ENCODE measurements at regions of chr6 and their contacts with region 1.

Region 1: GRCh38 chr6:109073344-109074132 is 21.1 kb downstream of the SESN1 start:
- DNase-seq: peak in 1 of 2 experiments; percentile 71
- H3K4me3 ChIP-seq: no peak overlapping the region
- H3K4me3 Mint-ChIP-seq: no peak overlapping the region
- H3K27ac Mint-ChIP-seq: no peak overlapping the region
- H3K4me1 ChIP-seq: peaks cover 16% of the 10 kb centered on the region; the same call in 1 of the 2 replicates
- H3K4me1 Mint-ChIP-seq: peaks cover 21% of the 10 kb centered on the region
- H3K27me3 ChIP-seq: no peaks in the 10 kb centered on the region
- H3K27me3 Mint-ChIP-seq: no peaks in the 10 kb centered on the region
- CTCF ChIP-seq: peak; percentile 47 to 59

Region 2: GRCh38 chr6:108541838-108542759 is 531.4 kb before region 1 on chr6:
- CTCF ChIA-PET with region 1: interaction called, 9 read pairs
- POLR2A ChIA-PET with region 1: no interaction called
- intact Hi-C with region 1: loop called (anchors 1 kb)
- DNase-seq: peak; percentile 67 to 74
- H3K4me3 ChIP-seq: peak overlapping the region; percentile 1; the same call in 1 of the 2 replicates
- H3K4me3 Mint-ChIP-seq: peak overlapping the region; percentile 55
- H3K27ac Mint-ChIP-seq: no peak overlapping the region
- H3K4me1 ChIP-seq: no peaks in the 10 kb centered on the region
- H3K4me1 Mint-ChIP-seq: no peaks in the 10 kb centered on the region
- H3K27me3 ChIP-seq: no peaks in the 10 kb centered on the region
- H3K27me3 Mint-ChIP-seq: no peaks in the 10 kb centered on the region
- CTCF ChIP-seq: peak; percentile 76 to 85

Region 3: DNA sequence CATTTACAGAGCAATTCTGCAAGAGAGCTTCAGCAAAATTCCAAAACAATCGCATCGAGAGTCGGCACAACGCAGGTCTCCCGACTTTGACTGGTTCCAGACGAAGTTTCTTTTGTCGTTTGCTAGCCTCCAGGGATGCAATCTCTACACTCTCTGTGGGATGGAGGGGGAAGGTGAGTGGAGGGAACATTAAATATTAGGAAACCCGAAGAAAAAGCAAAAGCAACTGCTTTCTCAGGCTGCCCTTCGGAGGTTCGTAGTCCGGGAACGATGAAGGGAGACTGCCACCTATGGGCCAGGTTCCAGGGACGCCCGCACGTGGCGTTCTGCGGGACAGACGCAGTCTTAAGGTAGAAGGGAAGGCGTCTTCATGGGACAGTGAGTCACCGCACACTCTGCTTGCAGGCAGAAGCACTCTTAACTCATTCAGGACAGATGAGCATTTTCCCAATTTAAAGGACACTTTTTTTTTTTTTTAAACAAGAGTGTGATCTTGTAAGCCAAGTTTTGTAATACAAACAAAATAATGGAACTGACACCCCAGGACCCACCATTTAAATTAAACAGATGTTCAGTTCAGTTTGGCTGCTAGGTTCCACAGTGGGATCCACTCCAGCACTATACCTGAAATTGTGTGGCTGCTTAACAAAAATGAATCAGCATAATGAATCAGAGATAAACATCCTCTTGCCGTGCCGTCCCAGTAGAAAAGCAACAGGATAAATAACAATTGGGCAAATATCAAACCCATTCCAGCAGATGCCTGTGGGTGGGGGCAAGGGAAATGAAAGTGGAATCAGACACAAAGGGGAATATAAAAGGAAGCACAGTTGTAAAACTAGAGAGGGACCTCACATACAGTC is 291.1 kb before region 1 on chr6:
- CTCF ChIA-PET with region 1: no interaction called
- POLR2A ChIA-PET with region 1: no interaction called
- intact Hi-C with region 1: loop called (anchors 1 kb)
- DNase-seq: peak; percentile 84 to 86
- H3K4me3 ChIP-seq: peak overlapping the region; percentile 30
- H3K4me3 Mint-ChIP-seq: peak overlapping the region; percentile 69
- H3K27ac Mint-ChIP-seq: no peak overlapping the region
- H3K4me1 ChIP-seq: 0 out of 2 replicates have a peak, but pooled peaks cover 7% of the 10 kb centered on the region
- H3K4me1 Mint-ChIP-seq: peaks cover 21% of the 10 kb centered on the region
- H3K27me3 ChIP-seq: no peaks in the 10 kb centered on the region
- H3K27me3 Mint-ChIP-seq: no peaks in the 10 kb centered on the region
- CTCF ChIP-seq: peak; percentile 72 to 92

Region 4: DNA sequence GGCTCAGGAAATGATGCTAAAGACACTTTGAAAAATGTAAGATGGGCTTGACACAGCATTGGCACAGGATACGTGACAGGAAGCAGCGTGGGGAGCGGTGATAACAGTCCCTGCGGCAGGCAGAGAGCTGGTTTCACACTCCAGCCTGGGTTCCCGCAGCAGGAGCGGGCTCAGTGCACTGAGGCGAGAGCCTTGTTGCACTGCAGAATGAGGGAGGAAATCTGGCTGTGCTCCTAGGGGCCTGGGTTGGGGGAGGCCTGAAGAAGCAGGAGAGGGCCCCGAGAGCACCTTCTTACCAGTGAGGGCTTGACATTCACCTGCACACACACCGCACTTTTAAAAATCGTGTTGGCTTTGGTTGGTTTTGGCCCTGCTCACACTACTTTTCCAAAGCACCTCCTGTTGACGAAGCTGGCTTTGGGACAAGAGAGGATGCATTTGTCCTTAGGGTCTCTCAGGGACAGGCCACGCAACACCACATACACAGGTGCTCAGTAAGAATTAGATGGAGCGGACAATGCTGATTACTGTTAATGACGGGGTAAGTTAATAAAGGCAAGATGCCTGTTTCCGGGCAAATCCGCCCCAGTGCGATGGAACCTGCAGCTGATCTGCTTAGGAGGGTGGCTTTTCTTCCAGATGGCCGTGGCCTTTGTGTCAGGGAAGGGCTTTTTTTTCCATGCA is 274.7 kb before region 1 on chr6:
- CTCF ChIA-PET with region 1: no interaction called
- POLR2A ChIA-PET with region 1: no interaction called
- intact Hi-C with region 1: loop called (anchors 1 kb)
- DNase-seq: no peak
- H3K4me3 ChIP-seq: no peak overlapping the region
- H3K4me3 Mint-ChIP-seq: peak overlapping the region; percentile 28
- H3K27ac Mint-ChIP-seq: peak overlapping the region; percentile 43
- H3K4me1 ChIP-seq: peaks cover 36% of the 10 kb centered on the region
- H3K4me1 Mint-ChIP-seq: peaks cover 23% of the 10 kb centered on the region
- H3K27me3 ChIP-seq: no peaks in the 10 kb centered on the region
- H3K27me3 Mint-ChIP-seq: no peaks in the 10 kb centered on the region
- CTCF ChIP-seq: no peak

Region 5: GRCh38 chr6:108896111-108896661 is 177.4 kb before region 1 on chr6:
- CTCF ChIA-PET with region 1: interaction called, 3 read pairs
- POLR2A ChIA-PET with region 1: no interaction called
- intact Hi-C with region 1: loop called (anchors 2 kb)
- DNase-seq: no peak
- H3K4me3 ChIP-seq: no peak overlapping the region
- H3K4me3 Mint-ChIP-seq: no peak overlapping the region
- H3K27ac Mint-ChIP-seq: no peak overlapping the region
- H3K4me1 ChIP-seq: peaks cover 10% of the 10 kb centered on the region
- H3K4me1 Mint-ChIP-seq: peaks cover 15% of the 10 kb centered on the region
- H3K27me3 ChIP-seq: no peaks in the 10 kb centered on the region
- H3K27me3 Mint-ChIP-seq: no peaks in the 10 kb centered on the region
- CTCF ChIP-seq: no peak

Region 6: GRCh38 chr6:109009236-109009961 is 64.1 kb before region 1 on chr6:
- CTCF ChIA-PET with region 1: interaction called, 3 read pairs
- POLR2A ChIA-PET with region 1: no interaction called
- intact Hi-C with region 1: loop called (anchors 2 kb)
- DNase-seq: peak; percentile 88 to 95
- H3K4me3 ChIP-seq: peak overlapping the region; percentile 82
- H3K4me3 Mint-ChIP-seq: peak overlapping the region; percentile 76
- H3K27ac Mint-ChIP-seq: peak overlapping the region; percentile 74
- H3K4me1 ChIP-seq: peaks cover 28% of the 10 kb centered on the region
- H3K4me1 Mint-ChIP-seq: peaks cover 18% of the 10 kb centered on the region
- H3K27me3 ChIP-seq: no peaks in the 10 kb centered on the region
- H3K27me3 Mint-ChIP-seq: no peaks in the 10 kb centered on the region
- CTCF ChIP-seq: no peak